ENCODE measurements at regions of chr21 and their contacts with region 1.

Region 1: DNA sequence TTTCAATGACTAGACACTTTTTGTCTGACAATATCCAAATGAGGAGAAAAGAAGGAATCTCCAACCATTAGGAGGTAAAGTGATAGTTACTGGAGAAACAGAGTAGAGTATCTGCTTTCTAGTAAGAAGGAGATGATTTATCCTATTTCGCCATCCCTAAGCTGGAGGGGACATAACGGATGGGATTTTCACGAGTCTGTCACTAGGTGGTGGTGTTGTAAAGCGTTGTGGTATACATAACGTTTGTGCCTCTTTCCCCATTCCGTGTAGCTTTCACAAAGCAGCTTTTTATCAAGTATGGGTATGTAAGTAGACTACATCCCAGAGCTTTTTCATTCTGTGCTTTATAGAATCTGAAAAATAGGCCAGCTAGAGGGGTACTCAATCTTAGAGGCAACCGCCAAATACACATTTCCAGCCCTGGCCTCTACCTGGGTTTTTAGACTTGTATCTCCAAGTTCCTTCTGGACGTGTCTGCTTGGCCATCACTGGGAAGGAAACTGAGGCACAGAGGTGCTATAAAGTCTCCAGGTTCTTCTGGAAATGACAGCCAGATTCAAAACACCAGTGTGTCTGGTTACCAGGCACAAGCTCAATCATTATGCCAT is 33.3 kb upstream of the FAM3B start:
- DNase-seq: peak; percentile 54
- ATAC-seq: peak; percentile 98
- H3K4me3 ChIP-seq: no peak overlapping the region
- H3K27ac ChIP-seq: no peak overlapping the region
- H3K4me1 ChIP-seq: no peaks in the 10 kb centered on the region
- H3K27me3 ChIP-seq: peaks cover 3% of the 10 kb centered on the region; the same call in 1 of the 2 replicates
- CTCF ChIP-seq: peak; percentile 74

Region 2: DNA sequence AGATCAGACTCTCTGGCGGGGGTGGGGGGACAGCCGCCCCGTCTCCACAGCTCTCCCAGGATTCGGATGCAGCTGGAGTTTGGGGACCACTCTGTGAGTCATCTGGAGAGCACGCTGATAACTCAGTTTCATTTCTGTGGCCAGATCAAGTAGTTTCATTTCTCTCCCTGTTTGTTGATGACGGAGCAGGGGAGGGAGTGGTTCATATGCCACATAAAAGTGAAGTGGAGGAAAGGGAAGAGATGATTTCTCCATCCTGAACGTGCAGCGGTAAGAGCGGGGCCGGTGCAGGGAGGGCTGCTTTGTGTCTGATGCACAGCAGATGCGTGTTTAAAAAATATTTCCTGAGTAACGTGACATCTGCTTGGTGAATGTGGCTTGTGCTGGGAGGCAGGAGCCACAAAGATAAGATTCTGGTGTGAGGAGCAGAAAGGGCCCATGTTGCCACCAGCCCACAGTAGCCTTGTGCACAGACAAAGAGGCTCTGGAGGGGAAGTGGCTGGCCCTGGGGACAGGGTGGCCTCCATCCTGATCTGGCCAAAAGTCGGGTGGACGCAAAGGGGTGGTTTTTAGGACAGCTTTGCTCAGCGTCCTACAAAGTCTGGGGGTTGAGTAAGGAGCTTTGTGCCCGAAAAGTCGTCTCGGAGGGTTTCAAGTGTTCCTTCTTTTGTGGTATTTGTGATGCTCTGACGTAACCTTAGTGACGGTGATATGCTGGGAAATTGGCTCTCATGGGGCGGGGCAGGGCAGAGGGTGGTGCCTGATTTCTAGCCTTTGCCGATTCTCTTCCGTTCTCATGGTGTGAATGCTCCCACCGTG is 78.7 kb after region 1 on chr21 and contains the start of gene MX2:
- CTCF ChIA-PET with region 1: interaction called, 16 read pairs
- POLR2A ChIA-PET with region 1: no interaction called
- in situ Hi-C with region 1: no loop called
- intact Hi-C with region 1: loop called (anchors 5 kb)
- DNase-seq: no peak
- ATAC-seq: no peak
- H3K4me3 ChIP-seq: no peak within 1 kb of the TSS
- H3K27ac ChIP-seq: no peak within 1 kb of the TSS
- H3K4me1 ChIP-seq: no peaks in the 10 kb centered on the region
- H3K27me3 ChIP-seq: no peaks in the 10 kb centered on the region
- CTCF ChIP-seq: no peak
- total RNA-seq, gene MX2: 56.7 TPM

Region 3: DNA sequence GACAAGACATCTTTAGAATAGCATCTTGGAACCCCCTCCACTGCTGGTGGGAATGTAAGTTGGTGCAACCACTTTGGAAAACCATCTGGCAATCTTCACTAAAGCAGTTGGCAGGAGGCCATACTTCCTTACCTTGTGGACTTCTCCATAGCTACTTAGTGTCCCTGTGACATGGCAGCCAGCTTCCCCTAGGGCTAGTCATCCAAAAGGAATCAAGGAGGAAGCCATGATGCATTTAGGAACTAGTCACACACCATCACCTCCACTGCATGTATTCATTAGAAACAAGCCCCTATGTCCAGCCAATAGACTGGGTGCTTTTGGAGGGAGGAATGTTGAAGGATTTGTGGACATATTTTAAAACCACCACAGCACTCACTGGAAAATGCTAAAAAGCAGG is 98.4 kb after region 1 on chr21:
- CTCF ChIA-PET with region 1: interaction called, 10 read pairs
- POLR2A ChIA-PET with region 1: no interaction called
- in situ Hi-C with region 1: no loop called
- intact Hi-C with region 1: no loop called
- DNase-seq: no peak
- ATAC-seq: no peak
- H3K4me3 ChIP-seq: no peak overlapping the region
- H3K27ac ChIP-seq: no peak overlapping the region
- H3K4me1 ChIP-seq: no peaks in the 10 kb centered on the region
- H3K27me3 ChIP-seq: no peaks in the 10 kb centered on the region
- CTCF ChIP-seq: no peak

Region 4: GRCh38 chr21:41460578-41461527 is 177.5 kb after region 1 on chr21:
- CTCF ChIA-PET with region 1: interaction called, 3 read pairs
- POLR2A ChIA-PET with region 1: no interaction called
- in situ Hi-C with region 1: no loop called
- intact Hi-C with region 1: loop called (anchors 5 kb)
- DNase-seq: peak; percentile 33
- ATAC-seq: peak; percentile 93
- H3K4me3 ChIP-seq: no peak overlapping the region
- H3K27ac ChIP-seq: no peak overlapping the region
- H3K4me1 ChIP-seq: no peaks in the 10 kb centered on the region; the same call in 1 of the 2 replicates
- H3K27me3 ChIP-seq: no peaks in the 10 kb centered on the region
- CTCF ChIP-seq: peak; percentile 85

Region 5: DNA sequence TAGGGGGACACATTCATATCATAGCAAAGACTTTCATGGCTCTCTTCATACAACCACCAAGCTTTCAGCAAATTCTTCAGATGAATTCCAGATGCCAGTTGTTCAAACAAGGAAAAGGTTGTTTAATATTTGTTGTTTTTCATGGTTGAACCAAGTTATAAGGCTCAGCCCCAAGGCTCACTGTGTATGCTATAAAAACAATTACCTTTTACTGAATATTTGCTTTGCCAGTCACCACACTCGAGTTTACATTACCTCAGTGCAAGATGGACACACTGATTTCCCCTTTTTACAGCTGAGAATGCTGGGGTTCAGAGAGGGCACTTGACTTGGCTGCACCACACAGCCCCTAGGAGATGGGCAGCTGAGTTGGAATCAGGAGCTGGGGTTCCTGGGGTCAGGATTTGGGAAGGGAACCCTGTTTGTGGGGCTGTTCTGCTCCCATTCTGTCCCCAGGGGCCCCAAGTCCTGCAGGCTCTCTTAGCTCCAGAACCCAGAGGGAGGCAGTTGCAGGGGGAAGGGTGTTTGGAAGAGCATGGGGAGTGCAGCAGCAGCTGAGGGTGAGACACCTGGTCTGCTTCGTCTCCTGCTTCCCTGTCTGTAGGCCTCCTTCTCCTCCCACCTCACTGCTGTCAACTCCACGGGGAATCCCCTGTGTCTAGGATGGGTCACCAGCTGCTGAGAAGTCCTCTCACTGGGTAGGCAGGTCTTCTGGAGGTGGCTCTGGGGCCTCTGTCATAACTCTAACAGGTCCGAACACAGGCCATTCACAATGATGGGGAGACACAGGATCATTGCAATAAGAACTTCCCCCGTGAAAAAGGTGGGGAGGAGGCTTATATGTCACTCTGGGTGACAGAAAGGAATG is 237.5 kb after region 1 on chr21:
- CTCF ChIA-PET with region 1: no interaction called
- POLR2A ChIA-PET with region 1: no interaction called
- in situ Hi-C with region 1: no loop called
- intact Hi-C with region 1: no loop called
- DNase-seq: no peak
- ATAC-seq: no peak; the same call in 1 of the 2 replicates
- H3K4me3 ChIP-seq: no peak overlapping the region
- H3K27ac ChIP-seq: peak overlapping the region; percentile 59
- H3K4me1 ChIP-seq: peaks cover 8% of the 10 kb centered on the region; the same call in 1 of the 2 replicates
- H3K27me3 ChIP-seq: no peaks in the 10 kb centered on the region
- CTCF ChIP-seq: no peak

Measured in Panc1 (cell line).